ENCODE measurements at regions of chr1 and their contacts with region 1.

Region 1: DNA sequence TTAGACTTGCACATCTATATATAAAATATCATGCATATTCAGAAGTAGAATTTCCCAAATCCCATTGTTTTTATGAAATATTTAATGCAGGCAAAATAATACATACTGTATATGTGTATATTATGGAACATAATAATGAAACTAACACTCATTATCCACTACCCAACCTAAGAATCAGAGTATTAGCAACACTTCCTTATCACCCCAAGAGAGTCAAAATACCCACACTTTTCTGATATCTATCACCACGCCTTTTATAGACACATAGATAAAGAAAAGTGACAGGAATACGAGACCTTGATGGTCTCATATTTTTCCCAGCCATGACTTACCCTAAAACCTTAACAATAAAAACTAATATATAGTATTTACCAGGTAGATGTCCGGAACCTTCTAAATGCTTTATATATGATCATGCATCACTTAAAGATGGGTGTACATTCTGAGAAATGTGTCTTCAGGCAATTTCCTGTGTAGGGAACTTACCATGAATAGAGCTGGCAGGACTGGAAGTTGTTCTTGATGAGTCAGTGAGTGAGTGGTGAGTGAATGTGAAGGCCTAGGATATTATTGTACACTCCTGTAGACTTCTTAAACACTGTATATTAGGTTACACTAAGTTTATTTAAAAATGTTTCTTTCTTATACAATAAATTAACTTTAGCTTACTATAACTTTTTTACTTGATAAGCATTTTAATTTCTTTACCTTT is 45.5 kb downstream of the TNFSF4 start:
- DNase-seq: no peak
- ATAC-seq: no peak
- H3K4me3 ChIP-seq: no peak overlapping the region
- H3K4me3 Mint-ChIP-seq: no peak overlapping the region
- H3K27ac ChIP-seq: no peak overlapping the region
- H3K27ac Mint-ChIP-seq: no peak overlapping the region
- H3K4me1 ChIP-seq: no peaks in the 10 kb centered on the region
- H3K4me1 Mint-ChIP-seq: no peaks in the 10 kb centered on the region
- H3K27me3 ChIP-seq: no peaks in the 10 kb centered on the region
- H3K27me3 Mint-ChIP-seq: no peaks in the 10 kb centered on the region
- CTCF ChIP-seq: no peak

Region 2: DNA sequence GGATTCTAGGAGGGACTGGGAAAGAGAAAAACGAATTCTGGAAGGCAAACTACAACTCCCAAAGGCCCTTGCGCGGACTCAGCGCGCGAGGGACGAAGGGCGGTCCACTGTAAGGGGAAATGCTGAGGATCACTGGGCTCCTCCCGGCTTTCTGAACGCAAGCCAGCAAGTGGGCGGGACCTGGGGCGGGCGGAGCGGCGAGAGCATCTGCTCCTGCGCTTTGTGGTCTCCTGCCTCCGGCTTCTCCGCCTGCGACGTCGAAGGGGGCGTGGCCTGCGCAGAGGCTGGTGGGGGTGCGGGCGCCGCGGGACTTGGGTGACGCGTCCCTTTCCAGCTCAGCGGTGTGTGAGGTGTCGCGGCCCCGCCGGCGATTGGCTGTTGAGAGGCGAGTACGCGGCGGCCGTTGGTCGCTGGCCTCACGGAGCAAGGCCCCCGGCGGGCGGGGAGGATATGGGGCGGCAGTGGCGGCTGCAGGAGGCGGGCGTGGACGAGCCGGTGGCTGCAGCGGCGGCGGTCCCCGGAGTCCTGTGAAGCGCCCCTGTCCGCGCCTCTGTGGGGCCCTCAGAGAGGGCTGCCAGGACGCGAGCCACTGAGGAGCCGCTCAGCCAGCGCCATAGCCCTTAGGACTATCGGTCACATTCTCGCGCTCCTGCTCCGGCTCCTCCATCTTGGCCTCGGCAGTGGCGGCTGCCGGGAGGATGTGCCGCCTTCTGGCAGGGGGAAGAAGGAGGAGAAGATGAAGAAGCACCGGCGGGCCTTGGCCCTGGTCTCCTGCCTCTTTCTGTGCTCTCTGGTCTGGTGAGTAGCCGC is 628.8 kb before region 1 on chr1 and contains the start of gene SUCO:
- CTCF ChIA-PET with region 1: no interaction called
- POLR2A ChIA-PET with region 1: no interaction called
- intact Hi-C with region 1: no loop called
- DNase-seq: peak; percentile 100
- ATAC-seq: peak; percentile 80
- H3K4me3 ChIP-seq: peak within 1 kb of the TSS; percentile 64 to 98 (median 96)
- H3K4me3 Mint-ChIP-seq: peak within 1 kb of the TSS; percentile 100
- H3K27ac ChIP-seq: peak within 1 kb of the TSS; percentile 99
- H3K27ac Mint-ChIP-seq: peak within 1 kb of the TSS; percentile 100
- H3K4me1 ChIP-seq: peaks cover 22 to 37% of the 10 kb centered on the region in 2 donors
- H3K4me1 Mint-ChIP-seq: peaks cover 45% of the 10 kb centered on the region
- H3K27me3 ChIP-seq: no peaks in the 10 kb centered on the region
- H3K27me3 Mint-ChIP-seq: peaks cover 9% of the 10 kb centered on the region
- CTCF ChIP-seq: peak; percentile 13
- total RNA-seq, gene SUCO: 59.7 and 59.9 TPM in 2 replicates

Region 3: GRCh38 chr1:173175514-173176145 is 14.0 kb after region 1 on chr1:
- CTCF ChIA-PET with region 1: no interaction called
- POLR2A ChIA-PET with region 1: no interaction called
- intact Hi-C with region 1: loop called (anchors 1 kb)
- DNase-seq: no peak
- ATAC-seq: no peak
- H3K4me3 ChIP-seq: peak overlapping the region in 2 of 5 experiments; percentile 2 to 21
- H3K4me3 Mint-ChIP-seq: peak overlapping the region; percentile 20
- H3K27ac ChIP-seq: peak overlapping the region in 1 of 2 donors; percentile 76
- H3K27ac Mint-ChIP-seq: peak overlapping the region; percentile 71
- H3K4me1 ChIP-seq: peaks cover 7 to 21% of the 10 kb centered on the region in 2 donors
- H3K4me1 Mint-ChIP-seq: peaks cover 12% of the 10 kb centered on the region
- H3K27me3 ChIP-seq: peaks cover 0 to 4% (median 0%) of the 10 kb centered on the region in 4 experiments
- H3K27me3 Mint-ChIP-seq: no peaks in the 10 kb centered on the region
- CTCF ChIP-seq: no peak